ENCODE measurements at regions of chr2 and their contacts with region 1.

Region 1: DNA sequence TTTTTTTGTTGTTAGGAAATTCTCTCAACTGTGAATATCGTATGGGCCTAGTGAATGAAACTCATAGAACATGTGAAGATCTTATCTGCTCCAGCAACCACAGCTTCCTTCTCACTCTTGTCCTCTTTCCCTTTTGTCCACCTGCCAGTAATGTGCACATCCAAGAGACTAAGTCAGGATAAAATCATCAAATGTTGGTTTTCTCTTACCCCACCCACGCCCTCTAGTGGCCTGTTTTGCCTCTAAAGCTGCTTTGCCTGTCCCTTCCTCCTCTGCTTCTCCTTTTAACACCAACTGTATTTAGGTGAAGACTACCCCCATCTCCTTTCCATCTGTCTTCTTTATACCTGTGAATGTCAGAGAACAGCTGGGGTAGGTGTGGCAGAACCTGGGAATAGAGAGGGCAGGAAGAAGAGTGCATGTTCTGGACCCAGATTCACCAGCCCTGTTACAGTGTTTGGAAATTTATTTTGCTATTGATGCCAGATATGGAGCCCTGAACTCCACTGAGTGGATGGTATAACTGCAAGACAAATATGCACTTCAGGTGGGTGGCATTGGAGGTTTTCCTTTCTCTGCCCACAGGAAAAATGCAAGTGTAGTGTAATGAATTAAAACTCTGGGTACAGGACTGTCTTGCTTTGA is 8.4 kb upstream of the MGAT5 start:
- DNase-seq: peak; percentile 86
- H3K4me3 Mint-ChIP-seq: no peak overlapping the region
- H3K27ac Mint-ChIP-seq: peak overlapping the region; percentile 33
- H3K4me1 Mint-ChIP-seq: peaks cover 65% of the 10 kb centered on the region
- H3K27me3 Mint-ChIP-seq: no peaks in the 10 kb centered on the region

Region 2: DNA sequence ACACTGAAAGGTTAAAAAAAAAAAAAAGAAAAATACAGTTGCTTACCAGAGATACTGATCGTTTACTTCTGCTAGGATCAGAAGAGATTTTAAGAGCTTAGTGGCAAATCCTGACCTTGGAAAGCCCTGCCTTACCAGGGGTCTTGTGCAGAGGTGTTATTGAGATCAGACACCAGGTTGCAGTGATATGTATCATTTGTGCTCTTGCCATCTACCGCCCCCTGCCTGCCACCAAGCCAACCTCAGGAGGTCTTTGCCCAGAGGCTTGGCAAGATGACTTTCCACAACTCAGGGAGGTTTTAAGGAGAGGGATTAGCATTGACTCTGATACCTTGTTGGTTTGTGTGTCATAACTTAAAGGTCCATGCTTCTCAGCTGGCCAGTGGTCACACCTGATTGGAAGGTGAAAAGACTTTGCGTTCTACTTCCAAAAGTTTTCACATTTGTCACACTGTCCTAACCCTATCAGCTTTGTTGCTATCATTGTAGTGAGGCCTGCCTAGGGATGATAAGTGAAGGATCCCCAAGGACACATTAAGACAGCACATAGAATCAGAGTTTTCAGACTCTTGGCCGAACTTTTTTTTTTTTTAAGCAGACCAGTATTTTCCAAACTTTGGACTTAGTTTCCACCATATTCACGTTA is 37.8 kb before region 1 on chr2:
- CTCF ChIA-PET with region 1: interaction called, 23 read pairs
- DNase-seq: peak; percentile 75
- H3K4me3 Mint-ChIP-seq: no peak overlapping the region
- H3K27ac Mint-ChIP-seq: no peak overlapping the region
- H3K4me1 Mint-ChIP-seq: peaks cover 8% of the 10 kb centered on the region
- H3K27me3 Mint-ChIP-seq: no peaks in the 10 kb centered on the region

Region 3: GRCh38 chr2:134228493-134228903 is 17.0 kb before region 1 on chr2:
- CTCF ChIA-PET with region 1: interaction called, 14 read pairs
- DNase-seq: no peak
- H3K4me3 Mint-ChIP-seq: no peak overlapping the region
- H3K27ac Mint-ChIP-seq: no peak overlapping the region
- H3K4me1 Mint-ChIP-seq: peaks cover 38% of the 10 kb centered on the region
- H3K27me3 Mint-ChIP-seq: no peaks in the 10 kb centered on the region

Region 4: GRCh38 chr2:134234535-134234934 is 10.9 kb before region 1 on chr2:
- CTCF ChIA-PET with region 1: interaction called, 14 read pairs
- DNase-seq: no peak
- H3K4me3 Mint-ChIP-seq: no peak overlapping the region
- H3K27ac Mint-ChIP-seq: peak overlapping the region; percentile 64
- H3K4me1 Mint-ChIP-seq: peaks cover 70% of the 10 kb centered on the region
- H3K27me3 Mint-ChIP-seq: no peaks in the 10 kb centered on the region

Measured in activated naive CD4-positive, alpha-beta T cell treated with anti-CD3 and anti-CD28 coated beads, Interleukin-2, amount 10 ng/mL, durations not matched to agents 7 days and 5 days (primary cell).